Activated CD8-positive, alpha-beta T cell treated with anti-CD3 and anti-CD28 coated beads, Interleukin-2, amount 10 ng/mL, durations not matched to agents 7 days and 5 days (primary cell): ENCODE measurements at regions of chr15 and their contacts with region 1.

Region 1: GRCh38 chr15:64153480-64154367 is 2.2 kb downstream of the SNX22 start:
- DNase-seq: peak; percentile 95
- ATAC-seq: peak; percentile 81
- H3K4me3 Mint-ChIP-seq: peak overlapping the region; percentile 47
- H3K27ac Mint-ChIP-seq: peak overlapping the region; percentile 57
- H3K4me1 Mint-ChIP-seq: peaks cover 39% of the 10 kb centered on the region
- H3K27me3 Mint-ChIP-seq: peaks cover 1% of the 10 kb centered on the region

Region 2: DNA sequence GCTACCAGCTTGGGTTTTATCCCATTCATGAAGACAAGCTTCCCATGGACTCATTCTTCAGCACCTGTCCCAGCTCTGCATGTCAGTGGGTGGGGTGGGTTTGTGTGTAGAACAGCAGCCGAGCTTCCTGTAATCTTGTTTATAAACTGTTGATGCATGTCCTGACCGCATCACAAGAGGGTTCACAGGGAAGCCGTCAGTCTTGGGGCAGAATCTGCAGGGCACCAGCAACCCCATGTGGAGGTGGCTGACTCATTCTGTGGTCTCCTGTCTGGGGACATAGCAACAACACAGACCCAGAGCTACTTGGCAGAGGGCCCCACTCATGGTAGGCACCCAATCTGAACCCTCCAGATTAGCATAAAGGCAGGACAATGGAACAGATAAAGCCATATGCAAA is 143.0 kb before region 1 on chr15:
- CTCF ChIA-PET with region 1: no interaction called
- POLR2A ChIA-PET with region 1: no interaction called
- DNase-seq: peak; percentile 92
- ATAC-seq: peak; percentile 100
- H3K4me3 Mint-ChIP-seq: peak overlapping the region; percentile 7
- H3K27ac Mint-ChIP-seq: peak overlapping the region; percentile 75
- H3K4me1 Mint-ChIP-seq: peaks cover 37% of the 10 kb centered on the region
- H3K27me3 Mint-ChIP-seq: peaks cover 5% of the 10 kb centered on the region

Region 3: DNA sequence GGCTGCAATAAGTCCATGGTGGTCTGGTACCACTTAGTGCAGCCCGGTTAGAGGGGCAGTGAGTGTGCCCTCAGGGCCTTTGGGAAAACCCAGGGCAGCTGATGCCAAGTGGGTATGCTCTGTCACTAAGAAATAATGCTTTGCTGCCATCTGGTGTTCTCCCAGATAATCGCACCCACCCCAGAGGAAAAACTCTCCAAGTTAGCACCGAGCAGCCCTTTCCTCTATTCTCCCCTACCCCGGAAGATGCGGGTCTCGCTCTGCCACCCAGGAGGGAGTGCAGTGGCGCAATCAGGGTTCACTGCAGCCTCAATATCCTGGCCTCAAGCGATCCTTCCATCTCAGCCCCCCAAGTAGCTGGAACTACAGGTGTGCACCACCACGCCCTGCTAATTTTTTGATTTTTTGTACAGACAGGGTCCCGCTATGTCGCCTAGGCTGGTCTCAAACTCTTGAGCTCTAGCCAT is 86.1 kb before region 1 on chr15:
- CTCF ChIA-PET with region 1: interaction called, 15 read pairs
- POLR2A ChIA-PET with region 1: no interaction called
- DNase-seq: peak; percentile 79
- ATAC-seq: peak; percentile 89
- H3K4me3 Mint-ChIP-seq: no peak overlapping the region
- H3K27ac Mint-ChIP-seq: peak overlapping the region; percentile 71
- H3K4me1 Mint-ChIP-seq: peaks cover 26% of the 10 kb centered on the region
- H3K27me3 Mint-ChIP-seq: no peaks in the 10 kb centered on the region

Region 4: DNA sequence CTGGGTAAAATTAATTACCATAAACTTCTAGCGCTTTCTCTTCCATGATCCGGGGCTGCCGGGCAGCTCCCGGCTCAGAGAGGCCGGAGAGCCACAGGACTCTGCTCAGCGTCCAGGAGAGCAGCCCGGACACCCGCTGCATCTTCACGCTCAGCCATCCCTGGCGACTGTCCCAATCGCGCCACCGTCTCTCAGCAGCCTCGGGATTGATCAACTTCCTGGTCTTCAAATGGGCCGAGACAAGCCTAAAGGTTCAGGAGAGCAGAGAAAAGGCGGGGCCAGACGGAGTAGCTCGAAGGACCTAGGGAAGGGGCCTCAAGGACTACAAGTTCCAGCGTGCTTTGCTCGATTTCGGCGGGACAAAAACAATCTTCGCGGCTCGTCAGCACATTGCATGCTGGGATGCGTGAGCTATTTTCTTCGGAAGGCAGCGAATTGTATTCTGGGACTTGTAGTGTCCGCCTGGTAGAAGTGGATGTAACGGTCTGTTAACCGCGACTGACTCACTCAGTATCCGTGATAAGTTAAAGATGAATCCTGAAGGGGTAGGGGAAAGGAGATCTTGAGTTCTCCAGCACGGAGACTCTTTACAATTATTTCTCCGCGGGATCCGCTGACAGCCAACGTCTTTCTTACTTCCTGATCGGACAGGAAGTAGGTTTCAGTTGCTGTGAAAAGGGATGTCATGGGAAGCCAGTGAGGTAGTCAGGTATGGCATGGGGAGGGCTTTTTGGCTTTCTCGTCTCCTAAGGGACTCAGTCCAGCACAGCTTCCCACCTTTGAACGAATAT is 59.9 kb before region 1 on chr15 and contains the start of gene CIAO2A:
- CTCF ChIA-PET with region 1: interaction called, 26 read pairs
- POLR2A ChIA-PET with region 1: interaction called, 11 read pairs
- DNase-seq: peak; percentile 98
- ATAC-seq: peak; percentile 76
- H3K4me3 Mint-ChIP-seq: peak within 1 kb of the TSS; percentile 99
- H3K27ac Mint-ChIP-seq: peak within 1 kb of the TSS; percentile 100
- H3K4me1 Mint-ChIP-seq: peaks cover 74% of the 10 kb centered on the region
- H3K27me3 Mint-ChIP-seq: no peaks in the 10 kb centered on the region
- total RNA-seq, gene CIAO2A: 78.7 to 80.9 TPM

Region 5: GRCh38 chr15:64117759-64118487 is 35.8 kb before region 1 on chr15:
- CTCF ChIA-PET with region 1: interaction called, 10 read pairs
- POLR2A ChIA-PET with region 1: interaction called, 3 read pairs
- DNase-seq: no peak
- ATAC-seq: no peak
- H3K4me3 Mint-ChIP-seq: no peak overlapping the region
- H3K27ac Mint-ChIP-seq: peak overlapping the region; percentile 13
- H3K4me1 Mint-ChIP-seq: peaks cover 4% of the 10 kb centered on the region
- H3K27me3 Mint-ChIP-seq: no peaks in the 10 kb centered on the region

Region 6: DNA sequence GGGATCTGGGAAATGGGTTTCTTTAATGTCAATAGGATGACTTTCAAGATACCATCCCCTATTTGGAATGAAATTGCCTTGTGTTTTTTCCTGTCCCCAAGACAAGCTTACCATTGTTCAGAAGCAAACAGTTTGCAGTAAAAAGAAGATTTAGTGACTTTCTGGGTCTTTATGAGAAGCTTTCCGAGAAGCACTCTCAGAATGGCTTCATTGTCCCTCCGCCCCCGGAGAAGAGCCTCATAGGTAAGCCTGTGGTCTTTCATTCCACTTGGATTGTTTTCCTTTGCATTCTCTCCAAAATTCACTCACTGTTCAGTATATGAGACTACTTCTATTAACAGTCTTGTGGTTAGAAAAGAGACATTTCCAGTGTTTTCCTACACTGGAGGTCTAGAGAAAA is 27.7 kb before region 1 on chr15:
- CTCF ChIA-PET with region 1: interaction called, 10 read pairs
- POLR2A ChIA-PET with region 1: interaction called, 3 read pairs
- DNase-seq: no peak
- ATAC-seq: no peak
- H3K4me3 Mint-ChIP-seq: no peak overlapping the region
- H3K27ac Mint-ChIP-seq: no peak overlapping the region
- H3K4me1 Mint-ChIP-seq: no peaks in the 10 kb centered on the region
- H3K27me3 Mint-ChIP-seq: no peaks in the 10 kb centered on the region

Region 7: GRCh38 chr15:64490598-64491259 is 337.0 kb after region 1 on chr15:
- CTCF ChIA-PET with region 1: no interaction called
- POLR2A ChIA-PET with region 1: no interaction called
- DNase-seq: no peak
- ATAC-seq: no peak
- H3K4me3 Mint-ChIP-seq: no peak overlapping the region
- H3K27ac Mint-ChIP-seq: no peak overlapping the region
- H3K4me1 Mint-ChIP-seq: peaks cover 17% of the 10 kb centered on the region
- H3K27me3 Mint-ChIP-seq: no peaks in the 10 kb centered on the region